Spleen (tissue), 13 donors: ENCODE measurements at regions of chr7 and their contacts with region 1.

Region 1: DNA sequence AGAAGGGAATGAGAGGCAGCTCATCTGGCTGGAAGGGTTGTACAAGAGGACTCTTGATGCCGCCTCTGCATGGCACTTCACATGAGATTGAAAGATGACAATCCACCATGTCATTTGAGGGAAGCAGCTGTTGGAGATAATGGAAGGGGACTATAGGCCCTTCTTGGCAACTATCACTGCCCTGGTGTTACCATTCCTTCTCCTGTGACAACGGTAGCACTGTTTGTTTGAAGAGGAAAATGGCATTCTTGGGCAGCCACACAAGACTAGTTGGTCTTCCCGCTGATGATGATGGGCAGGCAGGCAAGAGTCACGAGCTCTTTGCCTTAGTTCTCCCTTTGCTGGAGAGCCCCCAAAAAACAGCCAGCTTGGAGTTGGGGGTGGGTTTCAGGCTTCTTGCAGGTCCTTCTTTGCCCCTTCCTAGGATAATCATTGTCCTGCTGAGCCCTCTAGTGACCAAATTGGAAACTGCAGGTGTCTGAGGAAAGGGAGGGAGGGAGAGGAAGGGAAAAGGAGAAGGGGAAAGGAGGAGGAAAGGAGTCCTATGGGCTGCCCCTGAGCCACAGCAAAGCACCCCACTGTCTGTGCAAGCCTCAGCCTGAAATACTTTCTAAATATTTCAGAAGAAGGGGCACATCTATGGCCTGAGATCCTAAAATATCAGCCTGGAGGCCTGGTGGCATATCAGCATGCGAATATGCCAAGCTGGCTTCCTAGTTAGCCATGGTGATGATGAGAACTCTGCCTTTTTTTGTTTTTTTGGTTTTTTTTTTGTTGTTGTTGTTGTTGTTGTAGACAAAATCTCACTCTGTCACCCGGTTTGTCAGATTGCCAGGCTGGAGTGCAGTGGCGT is 165.6 kb upstream of the KMT2E start:
- DNase-seq: no peak
- H3K4me3 ChIP-seq: no peak overlapping the region
- H3K27ac ChIP-seq: no peak overlapping the region
- H3K4me1 ChIP-seq: no peaks in the 10 kb centered on the region
- H3K27me3 ChIP-seq: peaks cover 0 to 29% (median 0%) of the 10 kb centered on the region in 7 donors
- CTCF ChIP-seq: peak in 10 of 11 experiments; percentile 47 to 89 (median 80)
- POLR2A ChIP-seq: no peak

Region 2: GRCh38 chr7:103573479-103574058 is 1274.8 kb before region 1 on chr7:
- intact Hi-C with region 1: loop called (anchors 5 kb)
- DNase-seq: no peak
- H3K4me3 ChIP-seq: no peak overlapping the region
- H3K27ac ChIP-seq: no peak overlapping the region
- H3K4me1 ChIP-seq: no peaks in the 10 kb centered on the region
- H3K27me3 ChIP-seq: peaks cover 0 to 18% (median 0%) of the 10 kb centered on the region in 7 donors
- CTCF ChIP-seq: peak in 8 of 11 experiments; percentile 25 to 68 (median 62)
- POLR2A ChIP-seq: no peak

Region 3: GRCh38 chr7:104231054-104232046 is 617.0 kb before region 1 on chr7:
- intact Hi-C with region 1: loop called (anchors 5 kb)
- DNase-seq: no peak
- H3K4me3 ChIP-seq: peak overlapping the region in 1 of 8 donors; percentile 26
- H3K27ac ChIP-seq: peak overlapping the region in 1 of 8 donors; percentile 19
- H3K4me1 ChIP-seq: peaks cover 0 to 16% (median 10%) of the 10 kb centered on the region in 6 donors
- H3K27me3 ChIP-seq: peaks cover 0 to 15% (median 0%) of the 10 kb centered on the region in 7 donors
- CTCF ChIP-seq: peak; percentile 16 to 83 (median 63)
- POLR2A ChIP-seq: no peak

Region 4: DNA sequence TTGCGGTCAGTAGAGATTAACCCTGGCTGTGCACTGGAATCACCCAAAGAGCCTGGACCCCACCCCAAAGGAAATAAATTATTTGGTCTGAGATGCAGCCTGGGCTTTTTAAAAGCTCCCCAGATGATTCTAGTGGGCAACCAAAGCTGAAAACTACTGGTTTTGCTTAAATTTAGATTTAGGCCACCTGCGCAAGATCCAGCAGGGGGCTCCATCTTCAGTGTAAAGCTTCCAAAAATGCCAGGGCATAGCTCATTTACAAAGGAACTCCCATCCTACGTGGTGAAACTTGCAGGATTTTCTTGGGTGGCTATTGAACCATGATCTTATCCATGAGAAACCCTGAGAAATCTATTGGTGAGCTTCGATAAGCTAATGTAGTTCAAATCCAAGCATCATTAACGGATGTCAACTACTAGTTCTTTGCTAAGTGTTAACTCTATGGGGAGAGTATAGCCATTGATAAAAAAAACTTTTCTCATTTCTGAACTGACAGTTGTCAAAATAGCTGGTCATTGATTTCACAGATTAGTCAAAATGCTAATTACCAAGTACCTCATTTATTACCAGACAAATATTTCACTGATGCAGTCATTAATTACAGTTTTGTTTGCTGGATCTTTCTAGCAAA is 204.7 kb before region 1 on chr7:
- intact Hi-C with region 1: loop called (anchors 5 kb)
- DNase-seq: no peak
- H3K4me3 ChIP-seq: no peak overlapping the region
- H3K27ac ChIP-seq: no peak overlapping the region
- H3K4me1 ChIP-seq: no peaks in the 10 kb centered on the region
- H3K27me3 ChIP-seq: peaks cover 0 to 21% (median 0%) of the 10 kb centered on the region in 7 donors
- CTCF ChIP-seq: peak in 1 of 11 experiments; percentile 32
- POLR2A ChIP-seq: no peak

Region 5: DNA sequence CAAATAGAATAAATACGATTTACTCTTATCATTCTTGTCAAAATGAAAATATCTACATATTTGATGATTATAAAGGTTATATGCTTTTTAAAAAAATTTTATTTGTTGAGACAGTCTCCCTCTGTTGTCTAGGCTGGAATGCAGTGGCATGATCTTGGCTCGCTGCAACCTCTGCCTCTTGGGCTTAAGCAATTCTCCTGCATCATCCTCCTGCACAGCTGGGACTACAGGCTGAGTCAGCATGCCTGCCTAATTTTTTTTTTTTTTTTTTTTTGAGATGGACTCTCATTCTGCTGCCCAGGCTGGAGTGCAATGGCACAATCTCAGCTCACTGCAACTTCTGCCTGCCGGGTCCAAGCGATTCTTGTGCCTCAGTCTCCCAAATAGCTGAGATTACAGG is 624.8 kb after region 1 on chr7:
- intact Hi-C with region 1: no loop called
- DNase-seq: no peak
- H3K4me3 ChIP-seq: no peak overlapping the region
- H3K27ac ChIP-seq: no peak overlapping the region
- H3K4me1 ChIP-seq: no peaks in the 10 kb centered on the region
- H3K27me3 ChIP-seq: no peaks in the 10 kb centered on the region
- CTCF ChIP-seq: no peak
- POLR2A ChIP-seq: no peak